ENCODE measurements at regions of chr15 and their contacts with region 1.

Region 1: DNA sequence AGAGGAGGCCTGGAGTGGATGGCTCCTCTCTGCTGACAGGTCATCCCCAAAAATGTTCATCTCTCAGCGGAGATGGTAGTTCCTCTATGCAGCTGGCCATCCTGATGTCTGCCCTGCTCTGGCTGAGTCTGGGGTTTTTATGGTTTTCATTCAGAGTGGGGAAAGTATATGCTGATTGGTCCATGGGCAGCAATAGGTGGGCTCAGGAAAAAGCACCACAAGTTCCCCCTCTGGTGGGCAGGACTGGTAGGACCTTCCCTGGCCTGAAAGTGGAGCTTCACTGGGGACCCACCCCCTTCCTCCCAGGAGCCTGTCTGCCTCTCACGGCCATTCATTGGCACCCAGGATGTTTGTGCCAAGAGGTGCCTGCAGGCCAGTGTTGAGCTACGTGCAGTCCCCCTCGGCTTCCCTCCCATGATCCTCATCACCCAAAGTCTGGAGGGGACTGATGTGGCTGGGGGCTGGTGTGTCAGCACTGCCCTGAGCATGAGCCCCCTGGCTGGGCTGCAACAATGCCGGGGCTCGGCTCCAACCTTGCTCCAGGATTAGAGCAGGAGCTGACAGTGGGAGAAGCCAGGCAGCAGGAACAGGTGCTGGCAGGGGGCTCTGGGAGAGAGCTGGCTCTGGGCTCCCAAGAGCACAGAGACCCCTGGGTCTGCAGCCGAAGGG is 13.1 kb upstream of the BLOC1S6 start:
- DNase-seq: peak; percentile 92
- ATAC-seq: peak; percentile 99
- H3K4me3 Mint-ChIP-seq: peak overlapping the region; percentile 22; the same call in 1 of the 2 replicates
- H3K27ac Mint-ChIP-seq: no peak overlapping the region
- H3K4me1 Mint-ChIP-seq: peaks cover 4% of the 10 kb centered on the region
- H3K27me3 Mint-ChIP-seq: peaks cover 50% of the 10 kb centered on the region
- CTCF ChIP-seq: peak; percentile 55

Region 2: GRCh38 chr15:45448066-45448510 is 126.0 kb before region 1 on chr15:
- CTCF ChIA-PET with region 1: interaction called, 12 read pairs
- POLR2A ChIA-PET with region 1: no interaction called
- DNase-seq: no peak
- ATAC-seq: no peak
- H3K4me3 Mint-ChIP-seq: no peak overlapping the region
- H3K27ac Mint-ChIP-seq: no peak overlapping the region
- H3K4me1 Mint-ChIP-seq: peaks cover 10% of the 10 kb centered on the region
- H3K27me3 Mint-ChIP-seq: peaks cover 39% of the 10 kb centered on the region
- CTCF ChIP-seq: no peak

Region 3: GRCh38 chr15:45481135-45481534 is 93.0 kb before region 1 on chr15:
- CTCF ChIA-PET with region 1: interaction called, 12 read pairs
- POLR2A ChIA-PET with region 1: no interaction called
- DNase-seq: no peak
- ATAC-seq: no peak
- H3K4me3 Mint-ChIP-seq: no peak overlapping the region
- H3K27ac Mint-ChIP-seq: no peak overlapping the region
- H3K4me1 Mint-ChIP-seq: peaks cover 12% of the 10 kb centered on the region
- H3K27me3 Mint-ChIP-seq: peaks cover 96% of the 10 kb centered on the region
- CTCF ChIP-seq: no peak

Region 4: GRCh38 chr15:45527086-45527485 is 47.0 kb before region 1 on chr15:
- CTCF ChIA-PET with region 1: interaction called, 11 read pairs
- POLR2A ChIA-PET with region 1: no interaction called
- DNase-seq: no peak
- ATAC-seq: no peak
- H3K4me3 Mint-ChIP-seq: no peak overlapping the region
- H3K27ac Mint-ChIP-seq: no peak overlapping the region
- H3K4me1 Mint-ChIP-seq: peaks cover 5% of the 10 kb centered on the region; the same call in 1 of the 2 replicates
- H3K27me3 Mint-ChIP-seq: peaks cover 70% of the 10 kb centered on the region
- CTCF ChIP-seq: no peak

Region 5: DNA sequence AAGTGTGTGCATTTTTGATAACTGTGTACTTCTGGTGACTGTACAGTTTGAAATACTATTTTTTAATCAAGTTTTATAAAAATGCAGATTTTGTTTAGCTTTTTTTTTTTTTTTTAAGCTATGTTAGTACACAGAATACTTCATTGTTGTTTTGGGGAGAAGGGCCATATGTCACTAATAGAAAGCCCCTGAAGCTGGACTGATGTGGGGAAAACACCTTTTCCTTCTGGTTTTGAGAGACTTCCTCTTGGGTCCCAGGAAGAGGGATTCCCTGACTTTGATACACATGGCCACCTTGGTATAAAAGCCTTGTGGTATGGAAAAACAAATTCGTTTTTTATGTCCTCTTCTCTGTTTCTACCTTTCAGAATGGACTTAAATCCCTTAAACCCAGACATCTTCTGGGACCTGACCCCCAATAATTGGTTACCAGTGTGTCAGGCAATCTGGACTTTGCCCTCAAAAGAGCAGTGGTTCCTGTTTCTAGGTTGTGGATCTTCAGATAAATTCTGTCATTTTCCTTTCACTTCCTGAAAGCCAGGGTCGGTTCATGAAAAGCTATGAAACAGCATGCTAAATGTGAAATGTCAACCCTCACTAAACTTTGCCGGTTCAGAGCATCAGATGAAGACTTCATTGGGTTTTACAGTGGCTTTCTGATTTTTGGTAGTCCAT is 18.0 kb before region 1 on chr15:
- CTCF ChIA-PET with region 1: interaction called, 10 read pairs
- POLR2A ChIA-PET with region 1: no interaction called
- DNase-seq: no peak
- ATAC-seq: no peak
- H3K4me3 Mint-ChIP-seq: no peak overlapping the region
- H3K27ac Mint-ChIP-seq: no peak overlapping the region
- H3K4me1 Mint-ChIP-seq: no peaks in the 10 kb centered on the region
- H3K27me3 Mint-ChIP-seq: peaks cover 43% of the 10 kb centered on the region
- CTCF ChIP-seq: no peak

Region 6: GRCh38 chr15:45594319-45594718 is 20.2 kb after region 1 on chr15:
- CTCF ChIA-PET with region 1: interaction called, 10 read pairs
- POLR2A ChIA-PET with region 1: no interaction called
- DNase-seq: no peak
- ATAC-seq: no peak
- H3K4me3 Mint-ChIP-seq: no peak overlapping the region
- H3K27ac Mint-ChIP-seq: no peak overlapping the region
- H3K4me1 Mint-ChIP-seq: no peaks in the 10 kb centered on the region; the same call in 1 of the 2 replicates
- H3K27me3 Mint-ChIP-seq: no peaks in the 10 kb centered on the region
- CTCF ChIP-seq: no peak

Region 7: GRCh38 chr15:45641374-45641781 is 67.3 kb after region 1 on chr15:
- CTCF ChIA-PET with region 1: no interaction called
- POLR2A ChIA-PET with region 1: no interaction called
- DNase-seq: no peak
- ATAC-seq: no peak
- H3K4me3 Mint-ChIP-seq: no peak overlapping the region
- H3K27ac Mint-ChIP-seq: no peak overlapping the region
- H3K4me1 Mint-ChIP-seq: 0 out of 2 replicates have a peak, but pooled peaks cover 2% of the 10 kb centered on the region
- H3K27me3 Mint-ChIP-seq: peaks cover 36% of the 10 kb centered on the region
- CTCF ChIP-seq: no peak

Region 8: GRCh38 chr15:45705510-45706473 is 131.7 kb after region 1 on chr15:
- CTCF ChIA-PET with region 1: interaction called, 11 read pairs
- POLR2A ChIA-PET with region 1: no interaction called
- DNase-seq: peak; percentile 78
- ATAC-seq: peak; percentile 38
- H3K4me3 Mint-ChIP-seq: peak overlapping the region; percentile 84
- H3K27ac Mint-ChIP-seq: peak overlapping the region; percentile 41
- H3K4me1 Mint-ChIP-seq: peaks cover 14% of the 10 kb centered on the region
- H3K27me3 Mint-ChIP-seq: peaks cover 19% of the 10 kb centered on the region
- CTCF ChIP-seq: peak; percentile 95

Region 9: DNA sequence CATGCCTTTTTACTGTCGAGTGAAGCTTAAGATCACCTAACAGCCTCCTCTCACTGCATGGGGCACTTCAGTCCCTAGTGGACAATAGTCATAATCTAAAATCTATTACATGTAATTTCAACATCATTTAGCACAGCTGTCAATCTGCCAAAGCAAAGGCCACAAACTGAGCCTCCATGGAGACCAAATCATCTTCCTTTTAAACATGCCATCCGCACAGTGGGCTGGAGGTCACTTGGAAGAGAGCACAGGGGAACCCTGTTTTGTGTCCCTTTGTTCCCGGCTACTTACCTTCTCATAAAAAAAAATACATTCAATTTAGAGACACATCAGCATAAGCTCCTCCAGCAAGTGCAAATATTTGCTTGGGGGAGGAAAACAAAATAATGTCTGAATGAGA is 228.0 kb after region 1 on chr15:
- CTCF ChIA-PET with region 1: no interaction called
- POLR2A ChIA-PET with region 1: no interaction called
- DNase-seq: no peak
- ATAC-seq: no peak
- H3K4me3 Mint-ChIP-seq: no peak overlapping the region
- H3K27ac Mint-ChIP-seq: no peak overlapping the region
- H3K4me1 Mint-ChIP-seq: peaks cover 2% of the 10 kb centered on the region; the same call in 1 of the 2 replicates
- H3K27me3 Mint-ChIP-seq: no peaks in the 10 kb centered on the region; the same call in 1 of the 2 replicates
- CTCF ChIP-seq: no peak